ENCODE measurements at regions of chr10 and their contacts with region 1.

Region 1: GRCh38 chr10:124388823-124389612 is 29.7 kb downstream of the OAT start:
- DNase-seq: peak; percentile 87 to 97 (median 93)
- H3K4me3 ChIP-seq: peak overlapping the region; percentile 51
- H3K27ac ChIP-seq: peak overlapping the region in 1 of 2 donors; percentile 41
- H3K4me1 ChIP-seq: peaks cover 2% of the 10 kb centered on the region
- H3K27me3 ChIP-seq: no peaks in the 10 kb centered on the region
- CTCF ChIP-seq: peak; percentile 91 to 98 (median 96)
- EP300 ChIP-seq: no peak
- POLR2A ChIP-seq: no peak

Region 2: DNA sequence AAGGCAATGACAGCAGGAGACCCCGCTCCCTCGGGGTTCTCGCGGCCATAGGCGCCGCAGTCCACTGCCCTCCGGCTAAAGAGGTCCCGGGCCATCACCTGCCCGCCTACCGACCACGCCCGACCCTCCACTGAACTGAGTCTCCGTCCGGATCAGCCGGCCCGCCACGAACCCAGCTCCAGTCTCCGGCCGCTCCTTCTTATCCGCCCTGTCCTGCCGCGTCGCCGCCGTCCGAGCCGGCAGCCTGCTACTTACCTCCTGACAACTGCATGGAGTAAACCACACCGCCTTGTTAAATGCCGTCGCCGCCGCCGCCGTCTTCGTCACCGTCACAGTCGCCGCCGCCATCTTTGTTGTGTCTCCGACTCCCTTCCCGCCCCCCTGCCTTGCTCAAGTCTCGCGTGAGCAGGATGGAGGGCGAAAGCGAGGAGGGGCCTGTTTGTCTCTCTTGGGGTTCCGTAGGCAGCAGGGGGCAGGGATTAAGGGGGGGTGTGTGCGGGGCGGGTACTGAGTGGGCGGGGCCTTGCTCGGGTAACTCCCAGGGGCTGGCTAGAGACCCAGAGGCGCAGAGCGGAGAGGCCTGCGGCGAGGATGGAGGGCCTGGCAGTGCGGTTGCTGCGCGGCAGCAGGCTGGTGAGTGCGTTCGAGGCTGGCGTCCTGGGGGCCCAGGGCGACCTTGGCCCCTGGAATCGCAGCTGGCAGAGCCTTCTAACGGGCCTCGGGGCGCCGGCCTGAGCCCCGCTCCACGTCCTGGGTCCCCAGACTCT is 1380.4 kb before region 1 on chr10 and contains the starts of genes ACADSB and IKZF5:
- intact Hi-C with region 1: loop called in 1 of 4 experiments (anchors 5 kb)
- DNase-seq: peak; percentile 95 to 97 (median 95)
- H3K4me3 ChIP-seq: peak within 1 kb of the TSS; percentile 98
- H3K27ac ChIP-seq: peak within 1 kb of the TSS; percentile 77 to 79
- H3K4me1 ChIP-seq: peaks cover 5% of the 10 kb centered on the region
- H3K27me3 ChIP-seq: no peaks in the 10 kb centered on the region
- CTCF ChIP-seq: peak in 1 of 3 donors; percentile 4
- EP300 ChIP-seq: no peak
- POLR2A ChIP-seq: peak; percentile 84
- total RNA-seq, gene ACADSB: 10.5 to 26.6 (median 24.0) TPM
- total RNA-seq, gene IKZF5: 8.2 to 28.6 (median 20.5) TPM

Region 3: GRCh38 chr10:123200510-123200909 is 1188.5 kb before region 1 on chr10:
- intact Hi-C with region 1: no loop called
- DNase-seq: no peak
- H3K4me3 ChIP-seq: no peak overlapping the region
- H3K27ac ChIP-seq: no peak overlapping the region
- H3K4me1 ChIP-seq: no peaks in the 10 kb centered on the region
- H3K27me3 ChIP-seq: no peaks in the 10 kb centered on the region
- CTCF ChIP-seq: no peak
- EP300 ChIP-seq: no peak
- POLR2A ChIP-seq: no peak

Region 4: DNA sequence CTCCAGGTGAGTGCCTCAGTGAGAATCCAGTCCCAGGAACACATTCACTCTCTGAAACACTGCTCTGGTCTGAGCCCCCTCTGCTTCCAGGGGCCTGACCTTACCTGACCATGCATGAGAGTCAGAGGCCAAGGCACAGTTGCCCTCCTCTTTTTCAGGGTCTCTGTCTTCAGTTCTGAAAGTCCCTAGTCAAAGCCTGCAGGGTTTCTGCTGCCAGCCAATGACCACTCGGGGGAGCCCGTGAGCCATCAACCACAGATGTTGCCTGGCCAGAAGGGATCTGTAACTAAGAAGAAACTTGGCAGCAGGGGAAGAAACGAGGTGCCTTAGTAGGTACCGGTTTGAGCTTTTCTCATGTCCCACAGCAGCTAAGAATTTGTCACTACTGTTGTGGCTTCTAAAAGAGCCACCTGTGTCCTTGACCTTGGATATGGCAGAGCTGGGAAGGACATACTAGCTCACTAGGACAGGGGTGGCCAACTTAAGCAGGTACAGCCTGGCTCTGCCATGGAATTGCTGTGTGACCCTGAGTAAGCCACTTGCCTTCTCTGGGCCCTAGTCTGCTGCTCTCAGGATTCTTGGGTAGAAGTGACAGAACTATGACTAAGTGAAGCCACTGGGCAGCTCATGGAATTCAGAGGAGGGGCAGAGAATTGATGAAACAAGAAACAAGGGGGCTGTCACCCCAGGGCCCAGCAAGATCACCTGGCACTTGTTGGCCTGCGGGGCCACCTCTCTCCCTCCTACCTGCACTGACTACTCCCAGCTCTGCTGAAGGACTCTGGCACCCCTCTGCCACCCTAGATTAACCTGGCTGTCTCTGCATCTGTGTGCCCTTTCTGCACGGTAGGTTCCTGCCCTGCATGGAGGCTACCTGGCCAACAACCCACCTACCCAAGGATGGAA is 806.7 kb before region 1 on chr10:
- intact Hi-C with region 1: loop called in 1 of 4 experiments (anchors 5 kb)
- DNase-seq: peak; percentile 38 to 84 (median 69)
- H3K4me3 ChIP-seq: no peak overlapping the region
- H3K27ac ChIP-seq: no peak overlapping the region
- H3K4me1 ChIP-seq: no peaks in the 10 kb centered on the region
- H3K27me3 ChIP-seq: no peaks in the 10 kb centered on the region
- CTCF ChIP-seq: peak in 2 of 3 donors; percentile 39 to 62
- EP300 ChIP-seq: no peak
- POLR2A ChIP-seq: no peak

Region 5: GRCh38 chr10:123913688-123914268 is 475.2 kb before region 1 on chr10:
- intact Hi-C with region 1: no loop called
- DNase-seq: peak in 1 of 5 donors; percentile 44
- H3K4me3 ChIP-seq: no peak overlapping the region
- H3K27ac ChIP-seq: no peak overlapping the region
- H3K4me1 ChIP-seq: peaks cover 5% of the 10 kb centered on the region
- H3K27me3 ChIP-seq: no peaks in the 10 kb centered on the region
- CTCF ChIP-seq: no peak
- EP300 ChIP-seq: no peak
- POLR2A ChIP-seq: no peak

Region 6: DNA sequence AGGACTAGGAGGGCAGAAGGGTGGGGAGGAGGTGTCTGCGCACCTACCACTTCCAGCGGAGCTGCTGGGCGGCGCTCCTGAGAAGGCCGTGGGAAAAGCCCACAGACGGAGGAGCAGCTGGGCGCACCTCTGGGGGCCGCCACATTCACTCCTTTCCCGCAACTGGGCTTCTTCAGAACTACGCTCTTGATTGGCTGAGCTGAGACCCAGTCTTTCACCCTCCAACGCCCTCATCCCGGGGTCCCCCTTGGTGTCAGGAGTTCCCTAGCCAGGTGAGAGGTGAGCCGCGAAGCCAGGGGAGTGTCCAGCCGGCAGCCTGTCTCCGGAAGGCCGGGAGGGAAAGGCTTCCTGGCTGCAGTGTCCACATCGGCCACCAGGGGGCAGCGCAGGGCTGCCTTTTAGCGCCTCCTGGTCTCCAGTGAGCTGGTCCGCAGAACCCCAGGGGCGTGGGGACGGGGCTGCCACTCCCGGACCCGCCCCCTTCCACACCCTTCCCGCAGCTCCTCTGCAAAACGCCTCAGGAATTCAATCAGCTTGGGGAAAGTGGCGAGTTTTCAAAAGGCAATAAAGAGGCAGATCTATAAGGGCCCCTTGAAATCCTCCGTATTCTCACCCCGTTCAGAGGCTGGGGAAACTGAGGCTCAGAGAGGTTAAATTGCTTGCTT is 394.5 kb before region 1 on chr10:
- intact Hi-C with region 1: loop called (anchors 1 to 2 kb)
- DNase-seq: peak; percentile 89 to 97 (median 93)
- H3K4me3 ChIP-seq: no peak overlapping the region
- H3K27ac ChIP-seq: no peak overlapping the region
- H3K4me1 ChIP-seq: peaks cover 6% of the 10 kb centered on the region
- H3K27me3 ChIP-seq: no peaks in the 10 kb centered on the region
- CTCF ChIP-seq: peak; percentile 99 to 100 (median 99)
- EP300 ChIP-seq: no peak
- POLR2A ChIP-seq: no peak

Measured in ovary (tissue), 10 donors.